Adrenal gland (tissue), 19 donors: ENCODE measurements at regions of chr10 and their contacts with region 1.

Region 1: GRCh38 chr10:57638411-57638810 is 629.3 kb downstream of the IPMK start:
- DNase-seq: no peak
- H3K4me3 ChIP-seq: no peak overlapping the region
- H3K27ac ChIP-seq: no peak overlapping the region
- H3K4me1 ChIP-seq: no peaks in the 10 kb centered on the region
- H3K27me3 ChIP-seq: peaks cover 3% of the 10 kb centered on the region
- CTCF ChIP-seq: no peak
- POLR2A ChIP-seq: no peak

Region 2: GRCh38 chr10:56329961-56330360 is 1308.5 kb before region 1 on chr10:
- intact Hi-C with region 1: loop called in 1 of 2 experiments (anchors 10 kb)
- DNase-seq: no peak
- H3K4me3 ChIP-seq: no peak overlapping the region
- H3K27ac ChIP-seq: no peak overlapping the region
- H3K4me1 ChIP-seq: no peaks in the 10 kb centered on the region
- H3K27me3 ChIP-seq: no peaks in the 10 kb centered on the region
- CTCF ChIP-seq: no peak
- POLR2A ChIP-seq: no peak

Region 3: GRCh38 chr10:57687376-57687775 is 49.0 kb after region 1 on chr10:
- intact Hi-C with region 1: no loop called
- DNase-seq: no peak
- H3K4me3 ChIP-seq: no peak overlapping the region
- H3K27ac ChIP-seq: no peak overlapping the region
- H3K4me1 ChIP-seq: no peaks in the 10 kb centered on the region
- H3K27me3 ChIP-seq: no peaks in the 10 kb centered on the region
- CTCF ChIP-seq: no peak
- POLR2A ChIP-seq: no peak